Endothelial cell of umbilical vein (primary cell): ENCODE measurements at regions of chr1 and their contacts with region 1.

Region 1: GRCh38 chr1:74286414-74286813 is 51.2 kb downstream of the TNNI3K start:
- DNase-seq: no peak
- H3K4me3 ChIP-seq: no peak overlapping the region
- H3K27ac ChIP-seq: no peak overlapping the region
- H3K4me1 ChIP-seq: no peaks in the 10 kb centered on the region
- H3K27me3 ChIP-seq: no peaks in the 10 kb centered on the region
- CTCF ChIP-seq: no peak
- POLR2A ChIP-seq: no peak

Region 2: GRCh38 chr1:74012583-74012982 is 273.8 kb before region 1 on chr1:
- CTCF ChIA-PET with region 1: no interaction called
- POLR2A ChIA-PET with region 1: no interaction called
- dilution Hi-C with region 1: no loop called
- intact Hi-C with region 1: no loop called
- DNase-seq: no peak
- H3K4me3 ChIP-seq: no peak overlapping the region
- H3K27ac ChIP-seq: no peak overlapping the region
- H3K4me1 ChIP-seq: no peaks in the 10 kb centered on the region
- H3K27me3 ChIP-seq: no peaks in the 10 kb centered on the region
- CTCF ChIP-seq: no peak
- POLR2A ChIP-seq: no peak

Region 3: DNA sequence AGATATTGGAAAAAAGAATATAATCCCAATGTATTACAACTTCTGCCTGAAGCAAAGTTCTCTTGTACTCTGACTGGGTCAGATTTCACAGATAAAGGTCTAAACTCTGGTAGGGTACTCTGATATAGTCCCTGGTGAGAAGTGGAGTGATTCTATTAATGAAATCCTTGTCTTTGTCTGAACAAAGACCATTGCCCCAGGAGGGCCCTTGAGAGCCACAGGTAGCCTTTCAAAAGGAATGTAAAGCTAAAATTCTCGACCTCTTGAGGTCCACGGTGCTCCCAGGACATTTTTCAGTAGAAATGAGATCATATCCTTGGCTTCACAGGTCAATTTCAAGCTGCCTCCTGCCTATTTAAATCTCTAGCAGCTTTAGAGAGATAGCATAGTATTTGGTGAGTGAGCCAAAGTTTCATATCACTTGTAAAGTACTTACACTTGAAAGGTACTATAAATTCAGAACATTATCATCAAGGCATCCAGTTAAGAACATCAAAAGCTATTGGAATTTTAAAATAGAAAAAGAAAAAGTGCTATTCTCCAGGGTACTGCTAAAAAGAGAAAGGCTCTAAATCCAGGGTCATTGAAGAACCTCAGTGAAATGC is 41.1 kb before region 1 on chr1:
- CTCF ChIA-PET with region 1: no interaction called
- POLR2A ChIA-PET with region 1: no interaction called
- dilution Hi-C with region 1: no loop called
- intact Hi-C with region 1: no loop called
- DNase-seq: no peak
- H3K4me3 ChIP-seq: no peak overlapping the region
- H3K27ac ChIP-seq: no peak overlapping the region
- H3K4me1 ChIP-seq: no peaks in the 10 kb centered on the region
- H3K27me3 ChIP-seq: no peaks in the 10 kb centered on the region
- CTCF ChIP-seq: no peak
- POLR2A ChIP-seq: no peak

Region 4: GRCh38 chr1:74271503-74271902 is 14.9 kb before region 1 on chr1:
- CTCF ChIA-PET with region 1: no interaction called
- POLR2A ChIA-PET with region 1: no interaction called
- dilution Hi-C with region 1: no loop called
- intact Hi-C with region 1: no loop called
- DNase-seq: no peak
- H3K4me3 ChIP-seq: no peak overlapping the region
- H3K27ac ChIP-seq: no peak overlapping the region
- H3K4me1 ChIP-seq: no peaks in the 10 kb centered on the region
- H3K27me3 ChIP-seq: no peaks in the 10 kb centered on the region
- CTCF ChIP-seq: no peak
- POLR2A ChIP-seq: no peak

Region 5: GRCh38 chr1:74343216-74343615 is 56.8 kb after region 1 on chr1:
- CTCF ChIA-PET with region 1: no interaction called
- POLR2A ChIA-PET with region 1: no interaction called
- dilution Hi-C with region 1: no loop called
- intact Hi-C with region 1: loop called (anchors 5 kb)
- DNase-seq: no peak
- H3K4me3 ChIP-seq: no peak overlapping the region
- H3K27ac ChIP-seq: no peak overlapping the region
- H3K4me1 ChIP-seq: no peaks in the 10 kb centered on the region
- H3K27me3 ChIP-seq: no peaks in the 10 kb centered on the region
- CTCF ChIP-seq: no peak
- POLR2A ChIP-seq: no peak